ENCODE measurements at regions of chr1 and their contacts with region 1.

Region 1: GRCh38 chr1:212595787-212596714 is 12.5 kb upstream of the ATF3 start:
- DNase-seq: peak; percentile 85

Region 2: GRCh38 chr1:212477014-212477679 is 118.9 kb before region 1 on chr1:
- in situ Hi-C with region 1: loop called (anchors 25 kb)
- DNase-seq: peak; percentile 92

Region 3: GRCh38 chr1:212683357-212683722 is 87.3 kb after region 1 on chr1:
- in situ Hi-C with region 1: no loop called
- DNase-seq: peak; percentile 81